ENCODE measurements at regions of chr1 and their contacts with region 1.

Region 1: DNA sequence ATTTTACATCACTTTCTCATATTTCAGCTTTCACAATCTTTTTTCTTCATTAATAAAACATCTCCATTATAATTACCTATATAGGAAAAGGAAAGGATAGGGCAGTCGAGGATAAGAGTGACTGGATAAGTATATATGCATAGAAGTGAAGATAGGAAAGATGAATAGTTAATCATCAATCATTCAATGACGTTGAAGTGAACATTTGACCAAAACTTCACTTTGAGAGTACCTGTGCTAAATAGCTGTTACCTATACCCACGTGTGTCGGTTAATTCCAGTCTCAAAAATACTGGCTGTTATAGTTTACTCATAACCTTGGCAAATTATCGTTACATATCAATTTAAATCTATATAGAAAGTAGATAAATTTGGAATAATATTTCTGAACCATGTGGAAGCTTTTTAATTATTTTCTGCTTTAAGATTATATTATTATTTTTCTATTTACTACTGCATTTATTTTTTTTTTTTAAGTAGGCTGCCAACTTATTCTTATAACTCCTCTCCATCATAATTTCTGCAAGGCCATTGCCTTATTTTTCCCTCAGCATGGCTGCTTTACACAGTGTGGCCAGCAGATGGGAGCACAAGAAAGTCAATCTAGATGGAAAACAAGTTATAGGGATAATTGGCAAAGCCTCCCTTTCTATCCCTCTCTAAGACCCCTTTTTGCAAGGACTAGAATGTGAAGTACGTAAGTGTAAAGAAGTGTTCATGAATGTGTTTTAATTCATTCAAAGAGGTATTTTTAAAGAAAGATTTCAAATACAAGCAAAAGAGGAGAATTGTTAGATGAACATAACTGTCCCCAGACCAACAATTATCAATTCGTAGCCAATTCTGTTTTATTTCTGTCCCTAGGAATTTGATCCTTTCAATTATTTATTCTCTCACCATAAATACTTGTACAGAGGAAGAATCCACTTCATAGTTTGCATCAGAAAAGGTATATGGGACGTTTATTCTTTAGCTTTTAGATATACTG is 290.4 kb downstream of the KCNT2 start:
- DNase-seq: peak; percentile 70
- H3K4me3 Mint-ChIP-seq: no peak overlapping the region
- H3K27ac Mint-ChIP-seq: no peak overlapping the region
- H3K4me1 Mint-ChIP-seq: peaks cover 6% of the 10 kb centered on the region
- H3K27me3 Mint-ChIP-seq: no peaks in the 10 kb centered on the region
- CTCF ChIP-seq: peak; percentile 88

Region 2: DNA sequence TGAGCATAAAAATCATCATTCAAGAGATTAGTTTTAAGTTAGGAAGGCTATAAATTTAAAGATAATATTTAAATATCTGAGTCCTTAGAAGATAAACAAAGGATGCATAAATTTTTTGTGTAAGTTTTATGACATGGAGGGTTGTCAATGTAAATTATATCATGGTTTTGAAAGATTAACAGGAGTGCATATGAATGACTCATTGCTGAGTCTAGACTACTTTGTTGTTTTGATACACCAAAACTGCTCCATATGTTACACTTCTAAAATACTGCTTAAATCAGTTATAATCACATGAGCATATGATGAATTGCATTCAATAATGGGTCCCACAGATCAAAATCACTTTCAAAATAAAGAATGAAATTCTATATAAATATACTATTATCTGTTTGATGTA is 22.1 kb before region 1 on chr1:
- CTCF ChIA-PET with region 1: interaction called, 11 read pairs
- POLR2A ChIA-PET with region 1: no interaction called
- intact Hi-C with region 1: no loop called
- DNase-seq: peak; percentile 17
- H3K4me3 Mint-ChIP-seq: no peak overlapping the region
- H3K27ac Mint-ChIP-seq: no peak overlapping the region
- H3K4me1 Mint-ChIP-seq: peaks cover 7% of the 10 kb centered on the region
- H3K27me3 Mint-ChIP-seq: no peaks in the 10 kb centered on the region
- CTCF ChIP-seq: no peak

Region 3: DNA sequence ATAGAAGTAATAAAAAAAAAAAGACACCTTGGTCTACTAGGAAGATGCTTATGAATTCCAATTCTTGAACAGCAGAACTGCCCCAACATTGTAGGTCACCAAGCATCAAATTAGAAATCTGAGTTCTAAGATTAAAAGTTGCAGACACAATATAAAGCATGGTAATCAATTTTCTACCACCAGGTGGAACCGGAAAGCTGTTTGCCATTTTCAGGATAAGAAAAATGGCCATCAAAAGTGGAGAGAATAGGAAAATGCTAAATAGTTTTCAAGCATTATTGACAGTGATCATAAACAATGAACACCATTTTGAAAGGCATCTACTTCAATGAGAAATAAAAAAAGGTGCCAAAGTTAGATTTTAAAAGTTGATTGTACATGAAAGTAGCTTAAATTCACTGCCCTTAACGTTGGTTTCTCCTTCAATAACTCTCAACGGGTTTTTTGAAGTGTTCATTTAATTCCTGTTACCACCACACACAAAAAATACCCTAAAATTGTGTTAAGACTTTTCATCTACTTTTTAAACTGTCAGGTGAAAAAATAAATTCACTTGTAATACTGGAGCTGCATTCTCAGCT is 37.5 kb after region 1 on chr1:
- CTCF ChIA-PET with region 1: interaction called, 12 read pairs
- POLR2A ChIA-PET with region 1: interaction called, 3 read pairs
- intact Hi-C with region 1: no loop called
- DNase-seq: peak; percentile 62
- H3K4me3 Mint-ChIP-seq: no peak overlapping the region
- H3K27ac Mint-ChIP-seq: no peak overlapping the region
- H3K4me1 Mint-ChIP-seq: no peaks in the 10 kb centered on the region
- H3K27me3 Mint-ChIP-seq: no peaks in the 10 kb centered on the region
- CTCF ChIP-seq: peak; percentile 79

Region 4: DNA sequence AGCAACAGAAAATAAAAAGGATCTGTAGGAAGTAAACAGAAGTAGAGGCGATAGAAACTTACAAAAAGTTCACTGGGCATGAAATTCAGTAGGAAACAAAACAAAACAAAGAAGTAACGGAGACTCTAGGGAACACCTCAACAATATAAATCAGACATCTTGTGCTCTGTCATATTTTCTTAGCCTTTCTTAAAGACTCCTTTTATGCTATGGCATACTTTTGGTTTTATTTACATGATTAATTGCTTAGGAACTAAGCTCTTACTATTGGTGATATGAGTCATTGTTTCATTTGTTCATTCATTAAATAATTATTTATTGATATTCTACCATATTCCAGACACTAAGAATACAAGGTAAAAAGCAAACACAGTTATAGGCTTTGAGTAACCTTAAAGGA is 163.8 kb after region 1 on chr1:
- CTCF ChIA-PET with region 1: no interaction called
- POLR2A ChIA-PET with region 1: no interaction called
- intact Hi-C with region 1: no loop called
- DNase-seq: no peak
- H3K4me3 Mint-ChIP-seq: no peak overlapping the region
- H3K27ac Mint-ChIP-seq: no peak overlapping the region
- H3K4me1 Mint-ChIP-seq: peaks cover 11% of the 10 kb centered on the region
- H3K27me3 Mint-ChIP-seq: no peaks in the 10 kb centered on the region
- CTCF ChIP-seq: no peak